T-cell (primary cell): ENCODE measurements at regions of chr12 and their contacts with region 1.

Region 1: DNA sequence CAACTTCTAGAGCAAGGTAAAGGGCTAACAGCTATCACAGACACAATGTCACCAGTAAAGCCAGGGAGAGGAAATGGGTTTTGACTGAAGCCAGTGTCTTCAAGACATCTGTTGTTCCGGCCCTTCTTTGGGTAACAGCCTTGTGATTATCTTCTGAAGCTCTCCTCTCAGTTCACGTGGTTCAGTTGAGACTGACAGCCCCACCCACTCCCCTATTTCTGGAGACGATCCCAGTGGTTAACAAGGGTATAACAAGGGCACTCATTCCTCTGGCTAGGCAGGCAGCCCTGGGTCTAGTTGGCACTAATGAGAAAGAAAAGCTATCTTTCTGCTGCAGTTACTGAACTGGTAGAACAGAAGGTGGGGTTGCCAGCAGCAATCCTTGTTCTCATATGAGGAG is 6.9 kb downstream of the GNPTAB start:
- DNase-seq: peak; percentile 26 to 88 (median 76)
- ATAC-seq: peak; percentile 99
- H3K4me3 ChIP-seq: no peak overlapping the region
- H3K4me3 Mint-ChIP-seq: peak overlapping the region; percentile 52 to 58 (median 57)
- H3K27ac ChIP-seq: peak overlapping the region; percentile 44
- H3K27ac Mint-ChIP-seq: peak overlapping the region; percentile 93 to 96
- H3K4me1 ChIP-seq: peaks cover 32 to 57% of the 10 kb centered on the region in 2 experiments
- H3K4me1 Mint-ChIP-seq: peaks cover 70 to 81% (median 72%) of the 10 kb centered on the region in 3 donors
- H3K27me3 ChIP-seq: no peaks in the 10 kb centered on the region
- H3K27me3 Mint-ChIP-seq: no peaks in the 10 kb centered on the region

Region 2: GRCh38 chr12:101759396-101760047 is 64.4 kb before region 1 on chr12:
- CTCF ChIA-PET with region 1: interaction called, 6 to 10 read pairs
- POLR2A ChIA-PET with region 1: interaction called in 1 of 2 experiments, 3 read pairs
- DNase-seq: peak in 3 of 35 experiments; percentile 8 to 56 (median 11)
- ATAC-seq: peak in 2 of 4 experiments; percentile 56 to 63
- H3K4me3 ChIP-seq: no peak overlapping the region
- H3K4me3 Mint-ChIP-seq: no peak overlapping the region
- H3K27ac ChIP-seq: no peak overlapping the region
- H3K27ac Mint-ChIP-seq: no peak overlapping the region
- H3K4me1 ChIP-seq: no peaks in the 10 kb centered on the region
- H3K4me1 Mint-ChIP-seq: no peaks in the 10 kb centered on the region
- H3K27me3 ChIP-seq: no peaks in the 10 kb centered on the region
- H3K27me3 Mint-ChIP-seq: no peaks in the 10 kb centered on the region

Region 3: GRCh38 chr12:101773650-101774162 is 50.2 kb before region 1 on chr12:
- CTCF ChIA-PET with region 1: interaction called, 3 to 56 read pairs
- POLR2A ChIA-PET with region 1: interaction called in 1 of 2 experiments, 3 read pairs
- DNase-seq: peak; percentile 32 to 85 (median 60)
- ATAC-seq: peak; percentile 84 to 94 (median 90)
- H3K4me3 ChIP-seq: no peak overlapping the region
- H3K4me3 Mint-ChIP-seq: no peak overlapping the region
- H3K27ac ChIP-seq: no peak overlapping the region
- H3K27ac Mint-ChIP-seq: no peak overlapping the region
- H3K4me1 ChIP-seq: no peaks in the 10 kb centered on the region
- H3K4me1 Mint-ChIP-seq: peaks cover 0 to 7% (median 5%) of the 10 kb centered on the region in 3 donors
- H3K27me3 ChIP-seq: no peaks in the 10 kb centered on the region
- H3K27me3 Mint-ChIP-seq: no peaks in the 10 kb centered on the region

Region 4: GRCh38 chr12:101792051-101792931 is 31.6 kb before region 1 on chr12:
- CTCF ChIA-PET with region 1: interaction called, 4 to 32 read pairs
- POLR2A ChIA-PET with region 1: interaction called, 4 to 5 read pairs
- DNase-seq: peak in 1 of 35 experiments; percentile 32
- ATAC-seq: peak in 2 of 4 experiments; percentile 40 to 67
- H3K4me3 ChIP-seq: no peak overlapping the region
- H3K4me3 Mint-ChIP-seq: no peak overlapping the region
- H3K27ac ChIP-seq: no peak overlapping the region
- H3K27ac Mint-ChIP-seq: peak overlapping the region in 1 of 2 donors; percentile 45
- H3K4me1 ChIP-seq: peaks cover 0 to 16% of the 10 kb centered on the region in 2 experiments
- H3K4me1 Mint-ChIP-seq: peaks cover 12 to 25% (median 19%) of the 10 kb centered on the region in 3 donors
- H3K27me3 ChIP-seq: no peaks in the 10 kb centered on the region
- H3K27me3 Mint-ChIP-seq: no peaks in the 10 kb centered on the region

Region 5: GRCh38 chr12:101803978-101804377 is 19.9 kb before region 1 on chr12:
- CTCF ChIA-PET with region 1: interaction called in 1 of 2 experiments, 10 read pairs
- POLR2A ChIA-PET with region 1: interaction called, 3 to 6 read pairs
- DNase-seq: peak in 1 of 35 experiments; percentile 31
- ATAC-seq: no peak
- H3K4me3 ChIP-seq: no peak overlapping the region
- H3K4me3 Mint-ChIP-seq: no peak overlapping the region
- H3K27ac ChIP-seq: no peak overlapping the region
- H3K27ac Mint-ChIP-seq: no peak overlapping the region
- H3K4me1 ChIP-seq: no peaks in the 10 kb centered on the region
- H3K4me1 Mint-ChIP-seq: peaks cover 41 to 43% (median 43%) of the 10 kb centered on the region in 3 donors
- H3K27me3 ChIP-seq: no peaks in the 10 kb centered on the region
- H3K27me3 Mint-ChIP-seq: no peaks in the 10 kb centered on the region

Region 6: GRCh38 chr12:101839324-101840283 is 15.7 kb after region 1 on chr12:
- CTCF ChIA-PET with region 1: interaction called, 26 to 60 read pairs
- POLR2A ChIA-PET with region 1: interaction called in 1 of 2 experiments, 3 read pairs
- DNase-seq: peak; percentile 25 to 87 (median 59)
- ATAC-seq: peak; percentile 73 to 84 (median 79)
- H3K4me3 ChIP-seq: no peak overlapping the region
- H3K4me3 Mint-ChIP-seq: no peak overlapping the region
- H3K27ac ChIP-seq: no peak overlapping the region
- H3K27ac Mint-ChIP-seq: peak overlapping the region in 1 of 2 donors; percentile 66
- H3K4me1 ChIP-seq: peaks cover 5 to 17% of the 10 kb centered on the region in 2 experiments
- H3K4me1 Mint-ChIP-seq: peaks cover 8 to 16% (median 14%) of the 10 kb centered on the region in 3 donors
- H3K27me3 ChIP-seq: no peaks in the 10 kb centered on the region
- H3K27me3 Mint-ChIP-seq: no peaks in the 10 kb centered on the region

Region 7: DNA sequence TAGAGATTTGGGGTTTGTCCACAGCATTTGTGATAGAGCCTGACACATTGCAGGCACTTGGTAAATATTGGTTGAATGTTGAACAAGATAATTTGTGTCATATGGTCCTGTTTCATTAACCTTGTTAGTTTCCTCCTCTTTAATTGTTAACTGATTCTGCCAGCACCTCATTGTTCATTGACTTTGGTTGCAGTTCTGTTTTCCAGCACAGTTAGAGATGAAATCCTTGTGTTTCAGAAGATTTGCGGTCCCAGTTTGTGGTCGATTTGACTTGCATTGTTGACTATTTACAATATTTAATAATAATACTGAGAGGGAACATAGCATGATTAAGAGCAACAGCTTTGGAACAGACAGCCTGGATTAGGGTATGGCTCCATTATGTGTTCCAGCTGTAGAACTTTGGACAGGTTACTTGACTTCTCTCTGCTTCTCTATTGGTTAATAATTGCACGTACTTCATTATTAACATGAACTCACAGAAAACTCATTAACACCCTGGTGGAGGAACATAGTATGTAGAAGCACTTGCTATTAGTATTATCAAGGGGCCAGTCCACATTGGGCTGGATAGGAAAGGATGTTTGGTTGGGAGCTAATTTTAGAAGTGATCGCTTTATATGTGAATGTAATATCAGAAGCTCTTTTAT is 62.1 kb after region 1 on chr12:
- CTCF ChIA-PET with region 1: no interaction called
- POLR2A ChIA-PET with region 1: no interaction called
- DNase-seq: no peak
- ATAC-seq: no peak
- H3K4me3 ChIP-seq: no peak overlapping the region
- H3K4me3 Mint-ChIP-seq: no peak overlapping the region
- H3K27ac ChIP-seq: no peak overlapping the region
- H3K27ac Mint-ChIP-seq: no peak overlapping the region
- H3K4me1 ChIP-seq: no peaks in the 10 kb centered on the region
- H3K4me1 Mint-ChIP-seq: no peaks in the 10 kb centered on the region
- H3K27me3 ChIP-seq: no peaks in the 10 kb centered on the region
- H3K27me3 Mint-ChIP-seq: no peaks in the 10 kb centered on the region